ENCODE measurements at regions of chr20 and their contacts with region 1.

Region 1: GRCh38 chr20:6636209-6637159 is 131.0 kb upstream of the BMP2 start:
- DNase-seq: peak; percentile 80
- H3K4me3 Mint-ChIP-seq: no peak overlapping the region
- H3K27ac Mint-ChIP-seq: no peak overlapping the region
- H3K4me1 Mint-ChIP-seq: peaks cover 17% of the 10 kb centered on the region
- H3K27me3 Mint-ChIP-seq: no peaks in the 10 kb centered on the region
- CTCF ChIP-seq: peak; percentile 55

Region 2: GRCh38 chr20:6590891-6591631 is 45.4 kb before region 1 on chr20:
- CTCF ChIA-PET with region 1: interaction called, 15 read pairs
- POLR2A ChIA-PET with region 1: interaction called, 6 read pairs
- intact Hi-C with region 1: loop called (anchors 2 kb)
- DNase-seq: peak; percentile 98
- H3K4me3 Mint-ChIP-seq: peak overlapping the region; percentile 40
- H3K27ac Mint-ChIP-seq: peak overlapping the region; percentile 95
- H3K4me1 Mint-ChIP-seq: peaks cover 32% of the 10 kb centered on the region
- H3K27me3 Mint-ChIP-seq: no peaks in the 10 kb centered on the region
- CTCF ChIP-seq: no peak

Region 3: GRCh38 chr20:6651016-6651415 is 14.5 kb after region 1 on chr20:
- CTCF ChIA-PET with region 1: interaction called, 34 read pairs
- POLR2A ChIA-PET with region 1: interaction called, 13 read pairs
- intact Hi-C with region 1: no loop called
- DNase-seq: peak; percentile 99
- H3K4me3 Mint-ChIP-seq: no peak overlapping the region
- H3K27ac Mint-ChIP-seq: peak overlapping the region; percentile 46
- H3K4me1 Mint-ChIP-seq: peaks cover 34% of the 10 kb centered on the region
- H3K27me3 Mint-ChIP-seq: no peaks in the 10 kb centered on the region
- CTCF ChIP-seq: no peak

Region 4: GRCh38 chr20:6663104-6663503 is 26.6 kb after region 1 on chr20:
- CTCF ChIA-PET with region 1: interaction called, 14 read pairs
- POLR2A ChIA-PET with region 1: interaction called, 5 read pairs
- intact Hi-C with region 1: no loop called
- DNase-seq: peak; percentile 13
- H3K4me3 Mint-ChIP-seq: no peak overlapping the region
- H3K27ac Mint-ChIP-seq: no peak overlapping the region
- H3K4me1 Mint-ChIP-seq: peaks cover 28% of the 10 kb centered on the region
- H3K27me3 Mint-ChIP-seq: no peaks in the 10 kb centered on the region
- CTCF ChIP-seq: no peak

Region 5: DNA sequence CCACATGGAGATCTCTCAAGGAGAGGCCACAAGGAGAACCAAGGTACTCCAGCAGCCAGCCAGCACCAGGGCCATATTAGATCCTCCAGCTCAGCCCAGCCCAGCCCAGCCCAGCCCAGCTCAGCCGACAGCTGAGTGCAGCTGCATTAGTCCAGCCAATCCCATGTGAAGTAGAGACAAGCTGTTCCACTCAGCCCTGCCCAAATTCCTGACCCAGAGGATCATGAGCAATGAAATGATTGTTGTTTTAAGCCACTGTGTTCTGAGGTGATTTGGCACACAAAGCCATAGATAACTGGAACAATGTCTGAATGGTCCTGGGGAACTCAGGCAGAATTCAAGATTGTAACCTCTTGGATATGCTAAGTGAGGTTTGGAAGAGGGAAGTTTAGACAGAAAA is 71.5 kb after region 1 on chr20:
- CTCF ChIA-PET with region 1: interaction called, 25 read pairs
- POLR2A ChIA-PET with region 1: interaction called, 7 read pairs
- intact Hi-C with region 1: no loop called
- DNase-seq: peak; percentile 83
- H3K4me3 Mint-ChIP-seq: peak overlapping the region; percentile 29
- H3K27ac Mint-ChIP-seq: peak overlapping the region; percentile 85
- H3K4me1 Mint-ChIP-seq: peaks cover 67% of the 10 kb centered on the region
- H3K27me3 Mint-ChIP-seq: no peaks in the 10 kb centered on the region
- CTCF ChIP-seq: no peak

Region 6: GRCh38 chr20:6784767-6785166 is 148.3 kb after region 1 on chr20:
- CTCF ChIA-PET with region 1: no interaction called
- POLR2A ChIA-PET with region 1: no interaction called
- intact Hi-C with region 1: no loop called
- DNase-seq: no peak
- H3K4me3 Mint-ChIP-seq: no peak overlapping the region
- H3K27ac Mint-ChIP-seq: no peak overlapping the region
- H3K4me1 Mint-ChIP-seq: no peaks in the 10 kb centered on the region
- H3K27me3 Mint-ChIP-seq: no peaks in the 10 kb centered on the region
- CTCF ChIP-seq: no peak

Region 7: DNA sequence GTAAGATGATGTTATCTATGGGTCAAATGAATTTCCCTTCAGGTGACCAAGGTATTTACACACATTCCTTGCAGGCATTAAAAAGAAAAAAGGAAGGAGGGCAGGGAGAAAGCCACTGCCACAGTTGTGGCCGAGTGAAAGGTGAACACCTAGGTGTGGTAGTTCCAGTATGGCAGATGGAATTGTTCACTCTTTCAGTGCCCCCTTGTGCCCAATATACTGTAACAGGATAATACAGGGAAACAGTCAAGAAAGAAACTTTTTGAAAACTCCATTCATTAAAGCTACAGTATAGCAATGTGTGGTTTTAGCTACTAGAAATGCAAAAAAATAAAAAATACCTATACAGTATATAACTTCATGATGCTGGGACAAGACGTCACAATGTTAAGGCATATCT is 183.1 kb after region 1 on chr20:
- CTCF ChIA-PET with region 1: interaction called, 17 read pairs
- POLR2A ChIA-PET with region 1: no interaction called
- intact Hi-C with region 1: loop called (anchors 1 kb)
- DNase-seq: peak; percentile 42
- H3K4me3 Mint-ChIP-seq: no peak overlapping the region
- H3K27ac Mint-ChIP-seq: no peak overlapping the region
- H3K4me1 Mint-ChIP-seq: peaks cover 4% of the 10 kb centered on the region
- H3K27me3 Mint-ChIP-seq: no peaks in the 10 kb centered on the region
- CTCF ChIP-seq: peak; percentile 34

Region 8: GRCh38 chr20:7375905-7376304 is 739.4 kb after region 1 on chr20:
- CTCF ChIA-PET with region 1: interaction called, 8 read pairs
- POLR2A ChIA-PET with region 1: no interaction called
- intact Hi-C with region 1: loop called (anchors 5 kb)
- DNase-seq: peak; percentile 53
- H3K4me3 Mint-ChIP-seq: no peak overlapping the region
- H3K27ac Mint-ChIP-seq: no peak overlapping the region
- H3K4me1 Mint-ChIP-seq: no peaks in the 10 kb centered on the region
- H3K27me3 Mint-ChIP-seq: no peaks in the 10 kb centered on the region
- CTCF ChIP-seq: peak; percentile 35

Measured in MCF 10A (cell line).